Transverse colon (tissue), 4 donors: ENCODE measurements at regions of chr14 and their contacts with region 1.

Region 1: GRCh38 chr14:83421711-83422110 is 1888.1 kb upstream of the SEL1L start:
- DNase-seq: no peak
- H3K4me3 ChIP-seq: no peak overlapping the region
- H3K27ac ChIP-seq: no peak overlapping the region
- H3K4me1 ChIP-seq: peaks cover 0 to 6% (median 0%) of the 10 kb centered on the region in 4 donors
- H3K27me3 ChIP-seq: no peaks in the 10 kb centered on the region
- CTCF ChIP-seq: no peak
- EP300 ChIP-seq: no peak
- POLR2A ChIP-seq: no peak

Region 2: GRCh38 chr14:83379436-83379835 is 42.3 kb before region 1 on chr14:
- in situ Hi-C with region 1: no loop called
- intact Hi-C with region 1: loop called (anchors 2 kb)
- DNase-seq: no peak
- H3K4me3 ChIP-seq: no peak overlapping the region
- H3K27ac ChIP-seq: no peak overlapping the region
- H3K4me1 ChIP-seq: no peaks in the 10 kb centered on the region
- H3K27me3 ChIP-seq: no peaks in the 10 kb centered on the region
- CTCF ChIP-seq: no peak
- EP300 ChIP-seq: no peak
- POLR2A ChIP-seq: no peak